WTC11 (cell line): ENCODE measurements at regions of chr12 and their contacts with region 1.

Region 1: GRCh38 chr12:57896434-57897201 is 44.7 kb upstream of the ATP23 start:
- DNase-seq: peak; percentile 70
- ATAC-seq: peak; percentile 82
- H3K4me3 Mint-ChIP-seq: peak overlapping the region; percentile 78
- H3K27ac Mint-ChIP-seq: peak overlapping the region; percentile 69
- H3K4me1 Mint-ChIP-seq: peaks cover 46% of the 10 kb centered on the region
- H3K27me3 Mint-ChIP-seq: peaks cover 32% of the 10 kb centered on the region
- CTCF ChIP-seq: no peak

Region 2: GRCh38 chr12:57803319-57803893 is 93.2 kb before region 1 on chr12:
- CTCF ChIA-PET with region 1: interaction called, 20 read pairs
- POLR2A ChIA-PET with region 1: interaction called, 3 read pairs
- DNase-seq: peak; percentile 75
- ATAC-seq: peak; percentile 98
- H3K4me3 Mint-ChIP-seq: no peak overlapping the region
- H3K27ac Mint-ChIP-seq: no peak overlapping the region
- H3K4me1 Mint-ChIP-seq: no peaks in the 10 kb centered on the region
- H3K27me3 Mint-ChIP-seq: no peaks in the 10 kb centered on the region
- CTCF ChIP-seq: peak; percentile 49; the same call in 1 of the 2 replicates

Region 3: DNA sequence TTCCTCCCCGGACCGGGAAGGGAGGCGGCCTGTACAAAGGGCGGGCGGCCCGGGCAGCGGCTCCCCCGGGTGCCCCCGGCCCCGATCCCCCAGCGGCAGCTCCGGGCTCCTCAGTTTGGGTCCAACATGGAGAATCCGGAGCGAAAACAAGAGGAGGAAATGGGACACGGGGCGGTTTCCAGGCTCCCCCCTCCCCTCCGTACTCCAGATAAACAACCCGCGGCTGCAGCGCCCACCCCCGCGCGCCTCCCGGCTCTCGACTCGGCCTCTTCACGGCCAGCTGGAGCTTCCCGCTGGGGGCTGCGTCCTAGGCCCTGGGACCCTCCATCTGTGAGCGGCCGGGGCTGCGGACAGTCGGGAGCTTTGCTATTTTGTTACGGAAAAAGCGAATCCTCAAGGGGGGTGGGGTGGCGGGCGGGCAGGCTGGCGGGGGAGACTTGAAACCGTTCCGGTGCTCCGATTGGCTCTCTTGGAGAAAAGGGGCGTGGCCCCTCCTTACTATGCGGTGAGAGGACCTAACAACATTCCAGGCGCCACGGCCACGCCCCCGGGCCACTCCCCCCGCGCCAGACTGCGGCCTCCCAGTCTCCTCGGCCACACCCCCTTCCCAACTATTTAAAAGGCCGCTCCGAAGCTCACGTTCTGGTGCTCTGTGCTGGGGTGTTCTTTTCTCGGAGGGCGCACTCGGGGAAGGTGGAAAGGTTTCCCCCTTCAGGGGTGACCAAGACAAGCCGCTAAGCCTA is 49.9 kb before region 1 on chr12 and contains the start of gene CTDSP2:
- CTCF ChIA-PET with region 1: interaction called, 58 read pairs
- POLR2A ChIA-PET with region 1: interaction called, 64 read pairs
- DNase-seq: peak; percentile 100
- ATAC-seq: peak; percentile 65
- H3K4me3 Mint-ChIP-seq: peak within 1 kb of the TSS; percentile 69
- H3K27ac Mint-ChIP-seq: peak within 1 kb of the TSS; percentile 95
- H3K4me1 Mint-ChIP-seq: peaks cover 51% of the 10 kb centered on the region
- H3K27me3 Mint-ChIP-seq: peaks cover 14% of the 10 kb centered on the region
- CTCF ChIP-seq: no peak
- total RNA-seq, gene CTDSP2: 97.0 to 122 TPM (median 101 TPM) in 3 replicates

Region 4: GRCh38 chr12:57852620-57853500 is 43.8 kb before region 1 on chr12:
- CTCF ChIA-PET with region 1: interaction called, 58 read pairs
- POLR2A ChIA-PET with region 1: interaction called, 64 read pairs
- DNase-seq: peak; percentile 83
- ATAC-seq: peak; percentile 82
- H3K4me3 Mint-ChIP-seq: peak overlapping the region; percentile 66
- H3K27ac Mint-ChIP-seq: peak overlapping the region; percentile 91
- H3K4me1 Mint-ChIP-seq: peaks cover 40% of the 10 kb centered on the region
- H3K27me3 Mint-ChIP-seq: peaks cover 25% of the 10 kb centered on the region
- CTCF ChIP-seq: no peak

Region 5: GRCh38 chr12:57865090-57865751 is 31.4 kb before region 1 on chr12:
- CTCF ChIA-PET with region 1: interaction called, 14 read pairs
- POLR2A ChIA-PET with region 1: no interaction called
- DNase-seq: peak; percentile 74
- ATAC-seq: peak; percentile 56
- H3K4me3 Mint-ChIP-seq: peak overlapping the region; percentile 61
- H3K27ac Mint-ChIP-seq: no peak overlapping the region
- H3K4me1 Mint-ChIP-seq: peaks cover 36% of the 10 kb centered on the region
- H3K27me3 Mint-ChIP-seq: peaks cover 40% of the 10 kb centered on the region
- CTCF ChIP-seq: no peak